ENCODE measurements at regions of chr3 and their contacts with region 1.

Region 1: DNA sequence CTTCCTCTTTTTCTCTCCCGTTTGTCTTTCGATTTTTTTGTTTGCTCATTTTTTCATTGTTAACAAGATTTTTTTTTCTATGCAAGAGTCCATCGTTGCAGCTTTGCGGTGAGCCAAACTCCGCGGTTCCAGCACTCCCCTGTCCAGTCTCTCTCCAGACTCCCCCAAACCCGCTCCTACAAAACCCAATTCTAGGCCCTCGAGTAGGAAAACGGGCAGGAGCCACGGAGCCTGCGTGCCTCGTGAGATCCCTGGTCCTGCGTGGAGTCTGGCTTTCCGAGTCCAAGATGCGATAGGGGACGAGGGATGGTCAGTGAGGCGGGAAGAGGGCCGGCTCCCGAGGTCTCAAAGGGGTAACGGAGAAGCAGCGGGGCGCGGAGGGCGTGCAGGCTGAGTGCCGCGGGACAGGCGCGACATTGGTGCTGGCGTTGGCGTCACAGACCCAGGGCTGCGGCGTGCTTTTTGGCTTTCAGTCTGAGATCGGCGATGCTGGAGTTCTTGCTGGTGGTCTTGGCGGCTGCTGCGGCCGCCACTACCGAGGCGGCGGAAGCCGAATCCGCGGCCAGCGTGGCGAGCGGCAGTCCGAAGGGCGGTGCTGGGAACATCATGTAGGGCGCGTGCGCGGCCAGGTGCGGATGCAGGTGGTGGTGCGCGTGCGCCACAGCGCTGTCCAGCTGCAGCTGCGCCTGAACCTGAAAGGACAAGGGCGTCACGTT is 8.5 kb downstream of the SHOX2 start:
- DNase-seq: peak; percentile 88 to 91
- H3K4me3 ChIP-seq: peak overlapping the region; percentile 74
- H3K4me3 Mint-ChIP-seq: peak overlapping the region; percentile 75
- H3K27ac Mint-ChIP-seq: peak overlapping the region; percentile 46
- H3K4me1 ChIP-seq: no peaks in the 10 kb centered on the region
- H3K4me1 Mint-ChIP-seq: peaks cover 10% of the 10 kb centered on the region
- H3K27me3 ChIP-seq: no peaks in the 10 kb centered on the region
- H3K27me3 Mint-ChIP-seq: peaks cover 3% of the 10 kb centered on the region
- CTCF ChIP-seq: no peak

Region 2: DNA sequence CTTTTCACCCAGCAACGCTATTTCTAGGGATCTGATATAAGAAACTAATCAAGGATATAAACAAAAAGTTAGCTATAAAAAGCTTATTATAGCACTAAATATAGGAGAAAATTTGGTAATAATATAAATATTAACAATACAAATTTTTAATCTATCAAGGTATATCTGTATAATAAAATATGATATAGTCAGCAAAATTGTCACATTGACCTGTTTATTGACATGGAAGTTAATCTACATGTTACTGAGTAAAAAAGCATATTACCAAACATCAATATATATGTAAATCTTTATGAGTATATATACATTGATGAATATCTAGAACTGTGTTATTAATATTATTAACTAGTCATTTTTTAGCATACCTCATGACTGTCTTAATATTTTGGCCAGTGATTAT is 18.2 kb before region 1 on chr3:
- CTCF ChIA-PET with region 1: no interaction called
- POLR2A ChIA-PET with region 1: no interaction called
- intact Hi-C with region 1: no loop called
- DNase-seq: no peak
- H3K4me3 ChIP-seq: no peak overlapping the region
- H3K4me3 Mint-ChIP-seq: no peak overlapping the region
- H3K27ac Mint-ChIP-seq: no peak overlapping the region
- H3K4me1 ChIP-seq: no peaks in the 10 kb centered on the region
- H3K4me1 Mint-ChIP-seq: no peaks in the 10 kb centered on the region
- H3K27me3 ChIP-seq: no peaks in the 10 kb centered on the region
- H3K27me3 Mint-ChIP-seq: peaks cover 6% of the 10 kb centered on the region
- CTCF ChIP-seq: no peak

Region 3: DNA sequence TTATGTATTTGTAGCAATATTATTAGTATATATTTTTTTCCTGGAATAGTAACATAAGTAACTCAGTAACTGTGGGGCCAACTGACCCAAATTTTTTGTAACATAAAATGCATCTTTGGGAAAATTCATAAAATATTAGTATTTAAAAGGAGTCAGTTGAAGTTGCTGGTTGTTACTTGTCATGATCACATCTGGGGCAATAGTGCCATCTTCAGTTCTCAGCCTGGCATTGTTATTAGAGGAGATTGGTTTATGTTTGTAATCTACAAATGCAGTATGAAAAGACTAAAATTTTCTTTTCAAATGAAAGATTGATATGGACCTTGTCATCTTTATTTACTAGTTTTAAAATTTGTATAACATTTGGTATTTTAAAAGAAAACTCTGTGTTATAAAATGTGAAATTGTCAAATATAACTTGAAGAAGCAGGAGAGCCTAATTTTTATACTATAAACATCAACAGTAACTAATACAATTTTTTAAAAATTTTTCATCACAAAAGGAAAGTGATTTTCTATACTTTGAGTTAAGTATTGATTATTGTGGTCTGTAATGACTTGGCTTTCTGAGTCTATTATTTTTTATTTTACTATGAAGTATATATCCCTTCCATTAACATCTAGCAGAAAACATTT is 434.5 kb after region 1 on chr3:
- CTCF ChIA-PET with region 1: no interaction called
- POLR2A ChIA-PET with region 1: no interaction called
- intact Hi-C with region 1: loop called (anchors 5 kb)
- DNase-seq: peak in 1 of 2 experiments; percentile 9
- H3K4me3 ChIP-seq: no peak overlapping the region
- H3K4me3 Mint-ChIP-seq: no peak overlapping the region
- H3K27ac Mint-ChIP-seq: no peak overlapping the region
- H3K4me1 ChIP-seq: no peaks in the 10 kb centered on the region
- H3K4me1 Mint-ChIP-seq: no peaks in the 10 kb centered on the region
- H3K27me3 ChIP-seq: no peaks in the 10 kb centered on the region
- H3K27me3 Mint-ChIP-seq: no peaks in the 10 kb centered on the region
- CTCF ChIP-seq: peak in 1 of 2 experiments; percentile 44